Posterior vena cava (tissue), 2 donors: ENCODE measurements at regions of chr7 and their contacts with region 1.

Region 1: GRCh38 chr7:23115991-23116390 is 10.4 kb downstream of the KLHL7 start:
- DNase-seq: no peak

Region 2: DNA sequence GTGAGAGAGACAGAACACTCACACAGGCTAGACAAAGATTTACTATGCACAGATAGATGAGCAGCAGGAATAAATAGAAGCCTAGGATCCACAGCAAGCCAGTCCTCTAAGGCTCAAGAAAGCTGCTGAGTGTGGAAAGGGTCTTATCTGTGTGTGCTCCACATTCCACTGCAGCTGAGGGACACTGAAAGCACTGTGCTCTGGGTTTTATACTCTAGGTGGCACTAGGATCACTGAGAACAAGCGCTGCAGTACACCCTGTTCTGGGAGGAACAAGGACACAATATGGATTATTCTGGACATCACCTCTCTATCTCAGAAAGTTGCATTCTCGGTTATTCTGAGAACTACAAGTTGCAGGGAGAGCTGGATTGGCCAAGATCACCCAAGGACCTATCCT is 15.3 kb before region 1 on chr7:
- intact Hi-C with region 1: loop called in 1 of 2 experiments (anchors 1 kb)
- DNase-seq: no peak

Region 3: DNA sequence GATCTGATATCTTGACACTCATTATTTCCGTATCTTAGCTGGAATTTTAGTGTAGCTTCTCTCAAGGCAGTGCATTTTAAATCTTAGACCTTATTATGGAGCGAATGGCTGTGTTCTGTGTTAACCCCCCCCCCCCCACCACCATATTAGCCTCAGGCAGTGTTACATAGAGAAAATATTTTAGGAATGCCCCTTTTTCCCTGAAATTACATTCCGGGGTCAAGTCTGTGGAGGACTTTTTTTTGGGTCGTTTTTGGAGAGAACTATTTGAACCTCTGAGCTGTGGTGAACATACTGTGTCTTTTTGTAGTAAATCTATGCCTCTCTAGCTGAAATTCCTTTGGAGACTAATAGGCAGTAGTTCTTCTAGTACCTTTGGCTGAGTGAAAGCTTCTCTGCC is 484.3 kb after region 1 on chr7:
- intact Hi-C with region 1: no loop called
- DNase-seq: no peak